ENCODE measurements at regions of chr19 and their contacts with region 1.

Region 1: DNA sequence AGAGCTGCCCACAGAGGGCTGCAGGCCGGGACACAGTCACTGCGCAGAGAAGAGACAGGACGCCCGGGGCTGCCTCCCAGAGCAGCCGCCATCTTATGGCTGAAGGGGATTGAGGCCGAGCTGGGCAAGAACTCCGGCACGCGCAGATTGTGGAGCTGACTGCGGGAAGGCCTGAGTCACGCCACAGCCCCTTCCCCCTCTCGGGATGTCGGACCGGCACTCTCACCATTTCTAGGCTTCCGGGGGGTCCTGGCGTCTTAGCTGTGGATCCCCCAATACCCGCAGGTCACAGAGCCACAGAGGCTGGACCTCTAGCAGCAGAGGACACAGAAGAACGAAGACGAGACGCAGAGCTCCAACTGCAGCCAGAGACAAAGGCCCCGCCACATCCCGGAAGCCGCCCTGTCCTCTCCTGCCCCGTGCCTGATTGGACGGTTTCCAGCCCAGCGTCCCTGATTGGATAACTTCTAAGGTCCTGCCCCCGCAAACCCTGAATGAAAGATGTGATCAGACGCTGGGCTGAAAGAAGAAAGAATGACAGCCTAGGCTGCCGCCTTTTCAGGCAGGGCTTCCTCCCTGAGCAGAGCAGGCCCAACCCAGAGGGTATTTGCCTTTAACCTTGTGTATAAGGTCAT is at the start of gene ZNF43:
- DNase-seq: peak; percentile 90 to 95
- ATAC-seq: peak; percentile 96 to 99 (median 97)
- H3K4me3 ChIP-seq: peak within 1 kb of the TSS; percentile 73
- H3K4me3 Mint-ChIP-seq: peak within 1 kb of the TSS; percentile 98
- H3K27ac ChIP-seq: peak within 1 kb of the TSS; percentile 83
- H3K27ac Mint-ChIP-seq: peak within 1 kb of the TSS; percentile 98 to 100
- H3K4me1 ChIP-seq: peaks cover 15% of the 10 kb centered on the region
- H3K4me1 Mint-ChIP-seq: peaks cover 20 to 22% of the 10 kb centered on the region in 2 donors
- H3K27me3 ChIP-seq: no peaks in the 10 kb centered on the region
- H3K27me3 Mint-ChIP-seq: no peaks in the 10 kb centered on the region
- CTCF ChIP-seq: no peak
- total RNA-seq, gene ZNF43: 21.6 to 36.8 (median 31.0) TPM

Region 2: DNA sequence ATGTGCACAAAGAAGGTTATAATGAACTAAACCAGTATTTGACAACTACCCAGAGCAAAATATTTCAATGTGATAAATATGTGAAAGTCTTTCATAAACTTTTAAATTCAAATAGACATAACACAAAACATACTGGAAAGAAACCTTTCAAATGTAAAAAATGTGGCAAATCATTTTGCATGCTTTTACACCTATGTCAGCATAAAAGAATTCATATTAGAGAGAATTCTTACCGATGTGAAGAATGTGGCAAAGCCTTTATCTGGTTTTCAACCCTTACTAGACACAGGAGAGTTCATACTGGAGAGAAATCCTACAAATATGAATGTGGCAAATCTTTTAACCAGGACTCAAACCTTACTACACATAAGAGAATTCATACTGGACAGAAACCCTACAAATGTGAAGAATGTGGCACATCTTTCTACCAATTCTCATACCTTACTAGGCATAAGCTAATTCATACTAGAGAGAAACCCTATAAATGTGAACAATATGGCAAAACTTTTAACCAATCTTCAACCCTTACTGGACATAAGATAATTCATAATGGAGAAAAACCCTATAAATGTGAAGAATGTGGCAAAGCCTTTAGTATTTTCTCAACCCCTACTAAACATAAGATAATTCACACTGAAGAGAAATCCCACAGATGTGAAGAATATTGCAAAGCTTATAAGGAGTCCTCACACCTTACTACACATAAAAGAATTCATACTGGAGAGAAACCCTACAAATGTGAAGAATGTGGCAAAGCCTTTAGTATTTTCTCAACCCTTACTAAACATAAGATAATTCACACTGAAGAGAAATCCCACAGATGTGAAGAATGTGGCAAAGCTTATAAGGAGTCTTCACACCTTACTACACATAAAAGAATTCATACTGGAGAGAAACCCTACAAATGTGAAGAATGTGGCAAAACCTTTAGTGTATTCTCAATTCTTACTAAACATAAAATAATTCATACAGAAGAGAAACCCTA is 412.6 kb before region 1 on chr19:
- intact Hi-C with region 1: no loop called
- DNase-seq: no peak
- ATAC-seq: no peak
- H3K4me3 ChIP-seq: no peak overlapping the region
- H3K4me3 Mint-ChIP-seq: no peak overlapping the region
- H3K27ac ChIP-seq: no peak overlapping the region
- H3K27ac Mint-ChIP-seq: no peak overlapping the region
- H3K4me1 ChIP-seq: no peaks in the 10 kb centered on the region
- H3K4me1 Mint-ChIP-seq: peaks cover 0 to under 1% of the 10 kb centered on the region in 2 donors
- H3K27me3 ChIP-seq: no peaks in the 10 kb centered on the region
- H3K27me3 Mint-ChIP-seq: no peaks in the 10 kb centered on the region
- CTCF ChIP-seq: no peak

Region 3: DNA sequence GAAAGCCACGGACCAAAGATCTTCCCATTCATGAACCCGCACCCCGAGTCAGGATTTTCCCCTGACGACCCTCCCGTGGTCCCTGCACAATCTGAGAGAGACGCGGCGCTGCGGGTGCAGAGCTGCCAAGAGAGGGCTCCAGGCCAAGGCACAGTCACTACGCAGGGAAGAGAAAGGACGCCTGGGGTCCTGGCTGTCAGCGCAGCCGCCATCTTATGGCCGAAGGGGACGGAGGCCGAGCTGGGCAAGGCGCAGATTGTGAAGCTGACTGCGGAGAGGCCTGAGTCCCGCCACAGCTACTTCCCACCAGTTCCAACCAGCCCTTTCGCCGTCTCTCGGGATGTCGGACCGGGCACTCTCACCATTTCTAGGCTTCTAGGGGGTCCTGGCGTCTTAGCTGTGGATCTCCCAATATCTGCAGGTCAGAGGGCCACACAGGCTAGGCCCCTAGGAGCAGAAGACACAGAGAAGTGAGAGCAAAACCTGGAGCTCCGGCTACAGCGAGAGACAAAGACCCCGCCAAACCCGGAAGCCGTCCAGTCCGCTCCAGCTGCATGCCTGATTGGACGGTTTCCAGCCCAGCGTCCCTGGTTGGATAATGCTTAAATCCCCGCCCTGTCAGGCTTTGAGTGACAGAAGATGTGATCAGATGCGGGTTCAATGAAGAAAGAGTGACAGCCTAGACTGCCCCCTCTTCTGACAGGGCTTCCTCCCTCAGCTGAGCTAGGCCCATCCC is 68.7 kb before region 1 on chr19 and contains the start of gene ZNF100:
- intact Hi-C with region 1: loop called (anchors 1 kb)
- DNase-seq: peak; percentile 77 to 93
- ATAC-seq: peak; percentile 96 to 97 (median 97)
- H3K4me3 ChIP-seq: peak within 1 kb of the TSS; percentile 87
- H3K4me3 Mint-ChIP-seq: peak within 1 kb of the TSS; percentile 96
- H3K27ac ChIP-seq: peak within 1 kb of the TSS; percentile 92
- H3K27ac Mint-ChIP-seq: peak within 1 kb of the TSS; percentile 90 to 94
- H3K4me1 ChIP-seq: peaks cover 6% of the 10 kb centered on the region
- H3K4me1 Mint-ChIP-seq: peaks cover 28 to 30% of the 10 kb centered on the region in 2 donors
- H3K27me3 ChIP-seq: no peaks in the 10 kb centered on the region
- H3K27me3 Mint-ChIP-seq: no peaks in the 10 kb centered on the region
- CTCF ChIP-seq: no peak
- total RNA-seq, gene ZNF100: 7.9 to 16.9 (median 9.5) TPM

Region 4: GRCh38 chr19:21812450-21812849 is 23.5 kb before region 1 on chr19:
- intact Hi-C with region 1: no loop called
- DNase-seq: no peak
- ATAC-seq: no peak
- H3K4me3 ChIP-seq: no peak overlapping the region
- H3K4me3 Mint-ChIP-seq: no peak overlapping the region
- H3K27ac ChIP-seq: no peak overlapping the region
- H3K27ac Mint-ChIP-seq: no peak overlapping the region
- H3K4me1 ChIP-seq: no peaks in the 10 kb centered on the region
- H3K4me1 Mint-ChIP-seq: no peaks in the 10 kb centered on the region
- H3K27me3 ChIP-seq: no peaks in the 10 kb centered on the region
- H3K27me3 Mint-ChIP-seq: no peaks in the 10 kb centered on the region
- CTCF ChIP-seq: no peak

Region 5: DNA sequence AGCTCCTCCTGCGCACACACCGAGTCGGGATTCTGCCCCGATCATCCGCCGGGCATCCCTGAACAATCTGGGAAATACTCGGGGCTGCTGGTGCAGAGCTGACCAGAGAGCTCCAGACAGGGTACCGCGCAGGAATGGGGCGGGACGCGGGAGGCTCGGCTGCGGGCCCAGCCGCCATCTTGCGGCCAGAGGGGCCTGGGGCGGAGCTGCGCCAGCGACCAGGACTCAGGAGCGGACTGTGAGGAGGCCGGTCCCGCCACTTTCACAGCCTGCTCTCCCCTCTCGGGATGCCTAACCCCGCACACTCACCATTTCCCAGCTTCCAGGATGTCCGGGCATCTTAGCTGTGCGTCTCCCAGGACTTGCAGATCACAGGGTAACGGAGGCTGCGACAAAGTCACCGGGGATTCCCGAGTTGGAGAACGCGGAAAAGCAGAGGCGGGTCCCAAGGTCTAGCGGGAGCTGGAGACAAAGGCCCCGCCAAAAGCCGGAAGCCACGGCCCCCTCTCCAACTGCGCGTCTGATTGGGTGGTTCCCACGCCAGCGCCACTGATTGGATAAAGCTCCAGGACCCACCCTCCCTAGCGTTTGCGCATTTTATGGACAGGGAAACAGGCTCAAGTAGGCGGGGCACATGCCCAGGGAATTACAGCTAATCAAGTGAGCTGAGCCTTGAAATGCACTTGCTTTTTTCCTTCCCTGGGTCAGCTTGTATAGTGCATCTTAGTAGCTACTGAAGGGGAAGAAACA is 15.8 kb after region 1 on chr19:
- intact Hi-C with region 1: loop called (anchors 2 kb)
- DNase-seq: peak; percentile 87 to 93
- ATAC-seq: peak; percentile 97 to 99 (median 99)
- H3K4me3 ChIP-seq: peak overlapping the region; percentile 98
- H3K4me3 Mint-ChIP-seq: peak overlapping the region; percentile 94
- H3K27ac ChIP-seq: peak overlapping the region; percentile 79
- H3K27ac Mint-ChIP-seq: peak overlapping the region; percentile 74 to 87
- H3K4me1 ChIP-seq: peaks cover 15% of the 10 kb centered on the region
- H3K4me1 Mint-ChIP-seq: peaks cover 13% of the 10 kb centered on the region in 2 donors
- H3K27me3 ChIP-seq: no peaks in the 10 kb centered on the region
- H3K27me3 Mint-ChIP-seq: peaks cover 0 to 5% of the 10 kb centered on the region in 2 donors
- CTCF ChIP-seq: no peak